ENCODE measurements at regions of chr6 and their contacts with region 1.

Region 1: DNA sequence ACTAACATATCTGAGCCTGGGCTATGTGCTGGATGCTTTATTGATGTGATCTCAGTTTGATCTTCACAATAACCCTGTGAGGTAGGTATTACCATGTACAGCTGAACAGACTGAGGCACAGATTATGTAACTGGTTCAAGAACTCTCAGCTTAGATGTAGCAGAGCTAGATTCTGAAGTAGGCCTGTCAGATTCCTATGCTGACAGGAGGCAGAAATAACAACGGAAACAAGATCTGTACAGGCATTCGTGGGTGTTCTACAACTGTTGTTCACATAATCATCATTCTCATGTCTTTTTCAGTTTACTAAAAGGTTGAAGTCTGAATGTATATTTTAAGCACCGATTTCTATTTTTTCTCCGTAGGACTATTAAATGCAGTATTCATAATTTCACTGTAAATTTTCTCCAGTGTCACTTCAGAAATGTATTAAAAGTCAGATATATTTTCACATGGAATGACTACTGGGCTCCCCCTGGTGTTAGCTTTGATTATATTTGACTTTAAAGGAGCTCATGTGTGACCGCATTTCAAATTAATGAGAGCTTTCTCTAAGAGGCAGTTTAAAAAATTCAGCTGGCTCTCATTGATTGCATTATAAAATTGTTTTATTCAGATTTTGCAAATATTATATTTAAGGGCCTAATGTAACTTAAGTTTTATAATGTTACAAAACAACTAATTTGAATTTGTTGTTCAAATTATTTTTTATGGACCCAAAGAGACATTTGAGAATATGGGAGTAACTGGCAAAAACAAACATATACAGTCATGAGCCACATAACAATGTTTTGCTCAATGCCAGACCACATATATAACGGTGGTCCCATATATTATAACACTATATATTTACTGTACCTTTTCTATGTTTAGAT is 36.4 kb upstream of the SLC17A4 start:
- DNase-seq: peak; percentile 51
- ATAC-seq: no peak
- H3K4me3 ChIP-seq: no peak overlapping the region
- H3K4me3 Mint-ChIP-seq: no peak overlapping the region
- H3K27ac ChIP-seq: no peak overlapping the region
- H3K27ac Mint-ChIP-seq: no peak overlapping the region
- H3K4me1 ChIP-seq: no peaks in the 10 kb centered on the region
- H3K4me1 Mint-ChIP-seq: no peaks in the 10 kb centered on the region
- H3K27me3 ChIP-seq: no peaks in the 10 kb centered on the region
- H3K27me3 Mint-ChIP-seq: peaks cover 12% of the 10 kb centered on the region
- CTCF ChIP-seq: peak; percentile 79

Region 2: GRCh38 chr6:25670208-25670607 is 47.9 kb before region 1 on chr6:
- CTCF ChIA-PET with region 1: no interaction called
- POLR2A ChIA-PET with region 1: no interaction called
- intact Hi-C with region 1: no loop called
- DNase-seq: no peak
- ATAC-seq: no peak
- H3K4me3 ChIP-seq: no peak overlapping the region
- H3K4me3 Mint-ChIP-seq: no peak overlapping the region
- H3K27ac ChIP-seq: no peak overlapping the region
- H3K27ac Mint-ChIP-seq: no peak overlapping the region
- H3K4me1 ChIP-seq: no peaks in the 10 kb centered on the region
- H3K4me1 Mint-ChIP-seq: no peaks in the 10 kb centered on the region
- H3K27me3 ChIP-seq: peaks cover 0 to 12% (median 3%) of the 10 kb centered on the region in 4 experiments
- H3K27me3 Mint-ChIP-seq: peaks cover 30% of the 10 kb centered on the region
- CTCF ChIP-seq: no peak

Region 3: GRCh38 chr6:25732468-25733198 is 14.5 kb after region 1 on chr6:
- CTCF ChIA-PET with region 1: interaction called, 15 read pairs
- POLR2A ChIA-PET with region 1: no interaction called
- intact Hi-C with region 1: no loop called
- DNase-seq: no peak
- ATAC-seq: no peak
- H3K4me3 ChIP-seq: no peak overlapping the region
- H3K4me3 Mint-ChIP-seq: no peak overlapping the region
- H3K27ac ChIP-seq: no peak overlapping the region
- H3K27ac Mint-ChIP-seq: no peak overlapping the region
- H3K4me1 ChIP-seq: no peaks in the 10 kb centered on the region
- H3K4me1 Mint-ChIP-seq: no peaks in the 10 kb centered on the region
- H3K27me3 ChIP-seq: peaks cover 0 to 23% (median 8%) of the 10 kb centered on the region in 4 experiments
- H3K27me3 Mint-ChIP-seq: peaks cover 52% of the 10 kb centered on the region
- CTCF ChIP-seq: no peak